Thyroid gland (tissue), 4 donors: ENCODE measurements at regions of chr5 and their contacts with region 1.

Region 1: GRCh38 chr5:56200856-56201666 is 32.1 kb downstream of the ANKRD55 start:
- DNase-seq: peak; percentile 72 to 75
- H3K4me3 ChIP-seq: no peak overlapping the region
- H3K27ac ChIP-seq: no peak overlapping the region
- H3K4me1 ChIP-seq: peaks cover 0 to 5% of the 10 kb centered on the region in 2 donors
- H3K27me3 ChIP-seq: no peaks in the 10 kb centered on the region
- CTCF ChIP-seq: peak; percentile 36 to 93 (median 86)
- POLR2A ChIP-seq: no peak

Region 2: DNA sequence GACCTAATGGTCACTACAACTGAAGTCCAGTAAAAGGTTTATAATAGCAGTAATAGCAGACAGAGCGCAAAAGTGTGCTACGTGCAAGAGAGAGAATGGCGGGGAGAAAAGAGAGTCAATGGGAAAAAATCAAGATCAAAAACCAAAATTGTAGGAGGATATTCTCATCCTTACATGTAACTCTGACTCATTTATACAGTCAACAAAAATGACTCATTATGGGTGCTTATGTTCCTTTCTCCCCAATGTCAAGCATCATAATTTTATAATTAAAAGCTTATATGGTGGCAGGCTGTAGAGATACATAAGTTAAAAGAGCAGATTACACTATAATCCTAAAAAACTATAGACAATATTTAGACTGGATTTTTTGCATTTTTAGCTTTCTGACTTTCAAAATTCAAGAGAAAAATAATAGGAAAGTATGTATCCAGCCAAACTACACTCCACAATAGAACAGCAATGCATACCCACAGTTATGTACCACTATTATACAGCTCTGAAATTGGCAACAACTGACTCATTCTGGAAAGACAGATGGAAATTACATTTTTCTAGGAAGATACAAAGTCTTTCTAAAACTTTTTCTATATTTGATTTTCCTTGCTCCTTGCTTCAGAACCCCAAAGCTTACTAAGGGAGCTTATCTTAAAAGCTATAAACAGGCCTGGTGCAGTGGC is 744.7 kb before region 1 on chr5:
- intact Hi-C with region 1: no loop called
- DNase-seq: no peak
- H3K4me3 ChIP-seq: no peak overlapping the region
- H3K27ac ChIP-seq: no peak overlapping the region
- H3K4me1 ChIP-seq: peaks cover 0 to 12% of the 10 kb centered on the region in 2 donors
- H3K27me3 ChIP-seq: no peaks in the 10 kb centered on the region
- CTCF ChIP-seq: no peak
- POLR2A ChIP-seq: no peak

Region 3: DNA sequence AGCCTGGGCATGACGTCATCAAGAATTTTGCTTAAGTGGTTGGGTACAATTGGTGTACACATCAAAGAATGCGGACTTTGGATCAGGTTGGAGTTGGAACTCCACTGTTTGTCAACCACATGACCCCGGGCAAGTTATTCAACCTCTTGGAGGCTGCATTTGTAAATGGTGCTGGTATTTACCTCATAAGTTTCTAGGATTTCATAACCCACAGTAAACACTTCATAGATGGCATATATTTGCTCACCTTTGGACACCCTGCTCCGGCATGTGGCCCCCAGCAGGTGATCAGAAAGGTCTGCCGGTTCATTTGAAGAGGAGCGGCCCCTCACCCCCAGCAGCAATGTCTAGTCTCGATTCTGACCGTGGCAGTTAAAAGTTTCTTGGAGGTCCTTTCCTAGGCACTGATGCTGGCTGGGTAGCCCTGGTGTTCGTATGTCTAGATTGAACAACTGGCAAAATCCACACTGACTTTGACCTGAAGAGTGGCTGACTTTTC is 266.9 kb before region 1 on chr5:
- intact Hi-C with region 1: loop called (anchors 5 kb)
- DNase-seq: no peak
- H3K4me3 ChIP-seq: no peak overlapping the region
- H3K27ac ChIP-seq: no peak overlapping the region
- H3K4me1 ChIP-seq: no peaks in the 10 kb centered on the region
- H3K27me3 ChIP-seq: no peaks in the 10 kb centered on the region
- CTCF ChIP-seq: no peak
- POLR2A ChIP-seq: no peak

Region 4: GRCh38 chr5:55982957-55983381 is 218.1 kb before region 1 on chr5:
- intact Hi-C with region 1: loop called (anchors 10 kb)
- DNase-seq: peak; percentile 19 to 32
- H3K4me3 ChIP-seq: no peak overlapping the region
- H3K27ac ChIP-seq: peak overlapping the region in 1 of 3 donors; percentile 5
- H3K4me1 ChIP-seq: peaks cover 10 to 26% of the 10 kb centered on the region in 2 donors
- H3K27me3 ChIP-seq: no peaks in the 10 kb centered on the region
- CTCF ChIP-seq: peak in 5 of 6 experiments; percentile 8 to 46 (median 17)
- POLR2A ChIP-seq: no peak

Region 5: DNA sequence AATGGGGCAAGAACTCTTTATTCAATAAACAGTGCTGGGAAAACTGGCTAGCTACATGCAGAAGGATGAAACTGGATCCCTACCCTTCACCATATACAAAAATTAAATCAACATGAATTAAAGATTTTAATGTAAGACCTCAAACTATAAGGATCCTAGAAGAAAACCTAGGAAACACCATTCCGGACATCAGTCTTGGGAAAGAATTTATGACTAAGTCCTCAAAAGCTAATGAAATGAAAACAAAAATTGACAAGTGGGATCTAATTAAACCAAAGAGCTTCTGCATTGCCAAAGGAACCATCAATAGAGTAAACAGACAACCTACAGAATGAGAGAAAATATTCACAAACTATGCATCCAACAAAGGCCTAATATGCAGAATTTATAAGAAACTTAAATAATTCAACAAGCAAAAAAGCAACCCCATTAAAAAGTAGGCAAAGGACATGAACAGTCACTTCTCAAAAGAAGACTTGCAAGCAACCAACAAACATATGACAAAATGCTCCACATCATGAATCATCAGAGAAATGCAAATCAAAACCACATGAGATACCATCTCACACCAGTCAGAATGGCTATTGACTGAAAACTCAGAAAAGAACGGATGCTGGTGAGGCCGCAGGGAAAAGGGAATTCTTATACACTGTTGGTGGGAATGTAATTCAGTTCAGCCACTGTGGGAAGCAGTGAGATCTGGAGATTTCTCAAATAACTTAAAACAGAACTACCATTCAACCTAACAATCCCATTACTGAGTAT is 509.9 kb after region 1 on chr5:
- intact Hi-C with region 1: no loop called
- DNase-seq: no peak
- H3K4me3 ChIP-seq: no peak overlapping the region
- H3K27ac ChIP-seq: no peak overlapping the region
- H3K4me1 ChIP-seq: peaks cover 6 to 10% of the 10 kb centered on the region in 2 donors
- H3K27me3 ChIP-seq: no peaks in the 10 kb centered on the region
- CTCF ChIP-seq: no peak
- POLR2A ChIP-seq: no peak